WTC11 (cell line): ENCODE measurements at regions of chr12 and their contacts with region 1.

Region 1: DNA sequence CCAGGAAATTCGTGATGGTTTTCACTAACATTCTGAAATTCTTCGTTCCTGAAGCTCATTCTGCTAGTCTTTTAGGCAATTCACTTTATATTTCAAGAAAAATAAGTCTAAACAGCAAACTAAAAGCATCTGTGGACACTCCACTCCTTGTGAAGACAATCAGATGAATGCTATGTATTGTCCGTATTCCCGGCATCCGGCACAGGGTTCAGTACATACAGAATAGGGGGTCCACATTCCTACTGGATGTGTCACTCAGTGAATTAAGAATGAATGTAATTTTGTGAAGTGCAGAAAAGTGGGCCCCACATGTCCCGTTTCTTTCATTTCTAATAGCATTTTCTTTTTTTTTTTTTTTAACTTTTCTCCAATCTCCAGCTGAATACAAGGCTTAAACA is 241.3 kb downstream of the GRIN2B start:
- DNase-seq: no peak
- ATAC-seq: no peak
- H3K4me3 Mint-ChIP-seq: no peak overlapping the region
- H3K27ac Mint-ChIP-seq: no peak overlapping the region
- H3K4me1 Mint-ChIP-seq: peaks cover 8% of the 10 kb centered on the region
- H3K27me3 Mint-ChIP-seq: peaks cover 63% of the 10 kb centered on the region
- CTCF ChIP-seq: no peak

Region 2: DNA sequence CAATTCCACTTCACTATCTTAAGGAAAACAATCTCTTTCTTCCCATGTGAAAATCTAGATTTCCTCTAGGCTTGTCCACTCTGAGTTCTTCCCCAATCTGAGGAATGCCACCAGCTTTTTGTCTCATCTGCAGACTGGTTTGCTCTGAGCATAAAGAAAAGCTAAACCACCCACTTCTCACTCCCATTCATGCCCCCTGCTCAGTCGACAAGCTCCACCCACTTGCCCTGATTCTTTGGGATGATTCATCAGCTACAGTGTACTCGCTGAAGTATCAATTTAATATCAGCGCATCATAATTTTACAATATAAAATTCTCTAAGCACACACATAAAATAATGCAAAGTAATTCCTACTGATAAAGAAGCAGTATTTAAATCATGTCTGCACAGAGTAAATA is 32.1 kb after region 1 on chr12:
- CTCF ChIA-PET with region 1: no interaction called
- POLR2A ChIA-PET with region 1: no interaction called
- DNase-seq: no peak
- ATAC-seq: no peak
- H3K4me3 Mint-ChIP-seq: no peak overlapping the region
- H3K27ac Mint-ChIP-seq: no peak overlapping the region
- H3K4me1 Mint-ChIP-seq: peaks cover 2% of the 10 kb centered on the region
- H3K27me3 Mint-ChIP-seq: peaks cover 44% of the 10 kb centered on the region
- CTCF ChIP-seq: no peak

Region 3: DNA sequence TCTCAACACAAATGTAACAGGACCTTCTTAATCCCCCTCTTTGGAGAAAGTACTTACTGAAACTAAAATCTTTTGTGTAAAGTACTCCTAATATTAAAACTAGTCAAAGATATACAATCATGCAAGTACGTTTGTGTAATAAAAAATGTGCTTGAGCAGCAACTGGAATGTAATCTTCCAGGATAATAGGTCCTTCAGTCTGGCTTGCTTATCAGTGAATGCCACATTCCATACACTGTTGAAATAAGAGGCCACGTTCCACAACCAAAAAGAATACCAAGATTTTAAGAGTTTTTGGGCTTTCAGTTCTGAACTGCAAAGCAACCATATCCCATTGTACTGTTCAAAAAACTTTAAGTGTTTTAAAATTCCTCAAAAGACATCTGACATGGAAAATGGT is 267.5 kb after region 1 on chr12:
- CTCF ChIA-PET with region 1: no interaction called
- POLR2A ChIA-PET with region 1: interaction called, 14 read pairs
- DNase-seq: no peak
- ATAC-seq: no peak
- H3K4me3 Mint-ChIP-seq: no peak overlapping the region
- H3K27ac Mint-ChIP-seq: no peak overlapping the region
- H3K4me1 Mint-ChIP-seq: no peaks in the 10 kb centered on the region
- H3K27me3 Mint-ChIP-seq: no peaks in the 10 kb centered on the region; the same call in 1 of the 2 replicates
- CTCF ChIP-seq: no peak